HepG2 (cell line): ENCODE measurements at regions of chr1 and their contacts with region 1.

Region 1: GRCh38 chr1:118381197-118381869 is 196.3 kb upstream of the SPAG17 start:
- DNase-seq: no peak
- ATAC-seq: no peak
- H3K4me3 ChIP-seq: no peak overlapping the region
- H3K27ac ChIP-seq: no peak overlapping the region
- H3K4me1 ChIP-seq: no peaks in the 10 kb centered on the region
- H3K27me3 ChIP-seq: no peaks in the 10 kb centered on the region
- CTCF ChIP-seq: no peak
- EP300 ChIP-seq: no peak
- POLR2A ChIP-seq: no peak
- RAD21 ChIP-seq: no peak

Region 2: GRCh38 chr1:118429856-118430255 is 48.5 kb after region 1 on chr1:
- CTCF ChIA-PET with region 1: no interaction called
- POLR2A ChIA-PET with region 1: no interaction called
- in situ Hi-C with region 1: no loop called
- intact Hi-C with region 1: loop called (anchors 2 kb)
- DNase-seq: no peak
- ATAC-seq: no peak
- H3K4me3 ChIP-seq: no peak overlapping the region
- H3K27ac ChIP-seq: no peak overlapping the region
- H3K4me1 ChIP-seq: no peaks in the 10 kb centered on the region
- H3K27me3 ChIP-seq: no peaks in the 10 kb centered on the region; a peak in 1 of 5 replicates
- CTCF ChIP-seq: no peak
- EP300 ChIP-seq: no peak
- POLR2A ChIP-seq: no peak
- RAD21 ChIP-seq: no peak

Region 3: GRCh38 chr1:118485757-118486156 is 104.4 kb after region 1 on chr1:
- CTCF ChIA-PET with region 1: no interaction called
- POLR2A ChIA-PET with region 1: no interaction called
- in situ Hi-C with region 1: no loop called
- intact Hi-C with region 1: no loop called
- DNase-seq: no peak
- ATAC-seq: no peak
- H3K4me3 ChIP-seq: no peak overlapping the region
- H3K27ac ChIP-seq: no peak overlapping the region
- H3K4me1 ChIP-seq: no peaks in the 10 kb centered on the region
- H3K27me3 ChIP-seq: no peaks in the 10 kb centered on the region
- CTCF ChIP-seq: no peak
- EP300 ChIP-seq: no peak
- POLR2A ChIP-seq: no peak
- RAD21 ChIP-seq: no peak

Region 4: DNA sequence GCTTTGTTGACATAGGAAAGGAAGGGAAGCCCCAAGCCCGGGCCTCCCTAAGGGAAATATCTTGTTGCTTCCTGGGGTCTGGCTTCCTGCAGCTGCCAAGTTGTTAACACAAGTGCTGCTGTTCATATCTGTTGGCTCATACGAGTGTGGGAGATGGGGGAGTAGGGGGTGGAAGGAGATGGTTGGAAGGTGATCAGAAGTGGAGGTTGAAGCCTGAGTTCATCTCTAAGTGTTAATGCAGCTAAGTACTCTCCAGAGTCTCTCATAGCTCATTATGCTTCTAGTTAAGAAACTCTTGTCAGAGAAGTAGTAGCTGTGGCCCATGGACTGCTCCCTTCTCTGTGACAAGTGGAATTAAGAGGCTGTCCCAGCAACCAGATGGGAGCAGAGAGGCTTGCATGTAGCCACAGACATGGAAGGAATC is 122.9 kb after region 1 on chr1:
- CTCF ChIA-PET with region 1: no interaction called
- POLR2A ChIA-PET with region 1: no interaction called
- in situ Hi-C with region 1: no loop called
- intact Hi-C with region 1: no loop called
- DNase-seq: no peak
- ATAC-seq: no peak
- H3K4me3 ChIP-seq: no peak overlapping the region
- H3K27ac ChIP-seq: no peak overlapping the region
- H3K4me1 ChIP-seq: no peaks in the 10 kb centered on the region
- H3K27me3 ChIP-seq: no peaks in the 10 kb centered on the region
- CTCF ChIP-seq: no peak
- EP300 ChIP-seq: no peak
- POLR2A ChIP-seq: no peak
- RAD21 ChIP-seq: no peak